ENCODE measurements at regions of chr14 and their contacts with region 1.

Region 1: DNA sequence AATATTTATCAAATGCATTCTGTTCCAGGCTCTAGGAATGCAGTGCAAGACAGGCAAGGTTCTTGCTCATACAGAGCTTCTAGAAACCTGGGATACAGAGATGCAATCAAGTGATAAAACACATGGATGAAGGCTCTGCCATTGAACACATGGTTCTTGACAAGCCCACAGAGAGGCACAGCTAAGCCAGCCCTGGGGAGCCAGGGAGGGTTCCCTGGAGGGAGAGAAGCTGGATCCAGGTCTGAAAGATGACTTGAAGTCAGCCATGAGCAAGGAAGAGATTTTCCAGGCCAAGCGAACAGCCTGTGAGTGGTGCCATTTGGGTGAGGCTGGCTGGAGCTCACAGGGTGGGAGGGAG is 66.2 kb downstream of the IRF2BPL start:
- DNase-seq: no peak
- ATAC-seq: no peak
- H3K4me3 ChIP-seq: peak overlapping the region; percentile 52
- H3K4me3 Mint-ChIP-seq: peak overlapping the region; percentile 74
- H3K27ac ChIP-seq: peak overlapping the region; percentile 77 to 91
- H3K27ac Mint-ChIP-seq: peak overlapping the region; percentile 89
- H3K4me1 ChIP-seq: peaks cover 71% of the 10 kb centered on the region
- H3K4me1 Mint-ChIP-seq: peaks cover 79% of the 10 kb centered on the region
- H3K27me3 ChIP-seq: no peaks in the 10 kb centered on the region
- H3K27me3 Mint-ChIP-seq: no peaks in the 10 kb centered on the region
- CTCF ChIP-seq: no peak

Region 2: GRCh38 chr14:76168531-76168930 is 793.8 kb before region 1 on chr14:
- CTCF ChIA-PET with region 1: no interaction called
- POLR2A ChIA-PET with region 1: no interaction called
- intact Hi-C with region 1: no loop called
- DNase-seq: no peak
- ATAC-seq: no peak
- H3K4me3 ChIP-seq: no peak overlapping the region
- H3K4me3 Mint-ChIP-seq: no peak overlapping the region
- H3K27ac ChIP-seq: no peak overlapping the region
- H3K27ac Mint-ChIP-seq: no peak overlapping the region
- H3K4me1 ChIP-seq: peaks cover 4% of the 10 kb centered on the region
- H3K4me1 Mint-ChIP-seq: peaks cover 43% of the 10 kb centered on the region
- H3K27me3 ChIP-seq: no peaks in the 10 kb centered on the region
- H3K27me3 Mint-ChIP-seq: no peaks in the 10 kb centered on the region
- CTCF ChIP-seq: no peak

Region 3: DNA sequence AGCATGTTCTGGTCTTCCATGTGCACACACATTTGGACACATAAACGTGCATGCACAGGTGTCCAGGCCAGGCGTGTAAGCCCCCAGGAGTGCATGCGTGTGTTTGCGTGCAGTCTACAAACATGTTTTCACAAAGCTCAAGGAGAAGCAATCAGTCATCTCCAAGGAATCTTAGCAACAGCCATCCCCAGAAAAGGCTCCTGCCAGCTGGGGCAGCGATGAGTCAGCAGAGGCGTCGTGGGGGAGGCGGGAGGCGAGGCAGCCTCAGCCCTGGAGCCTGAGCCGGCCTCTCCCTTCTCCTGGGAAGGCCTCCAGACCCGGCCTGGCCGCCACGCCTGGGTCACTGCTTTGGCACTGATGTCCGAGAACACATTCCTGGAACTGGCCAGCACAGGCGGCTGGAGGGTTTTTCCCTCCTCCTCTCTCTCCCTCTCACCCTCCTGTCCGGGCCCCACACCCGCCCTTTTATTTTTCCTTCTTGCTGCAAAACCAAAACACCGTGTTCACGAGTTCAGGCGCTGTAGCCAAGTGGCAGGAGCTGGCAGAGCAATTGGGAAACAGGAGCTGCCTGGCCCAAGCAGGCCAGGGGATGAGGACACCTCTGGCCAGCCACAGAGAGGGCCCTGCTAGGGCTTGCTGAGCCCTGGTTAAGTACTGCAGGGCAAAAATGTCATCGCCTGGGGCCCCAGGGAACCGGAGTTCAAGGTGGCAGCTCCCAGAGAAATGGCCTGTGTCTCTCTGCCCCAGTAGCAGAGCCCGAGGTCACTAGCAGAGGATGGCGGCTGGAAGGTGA is 43.3 kb before region 1 on chr14:
- CTCF ChIA-PET with region 1: interaction called, 20 read pairs
- POLR2A ChIA-PET with region 1: interaction called, 18 read pairs
- intact Hi-C with region 1: no loop called
- DNase-seq: peak in 2 of 14 experiments; percentile 46 to 49
- ATAC-seq: no peak
- H3K4me3 ChIP-seq: no peak overlapping the region
- H3K4me3 Mint-ChIP-seq: no peak overlapping the region
- H3K27ac ChIP-seq: no peak overlapping the region
- H3K27ac Mint-ChIP-seq: no peak overlapping the region
- H3K4me1 ChIP-seq: peaks cover 51% of the 10 kb centered on the region
- H3K4me1 Mint-ChIP-seq: peaks cover 60% of the 10 kb centered on the region
- H3K27me3 ChIP-seq: no peaks in the 10 kb centered on the region
- H3K27me3 Mint-ChIP-seq: no peaks in the 10 kb centered on the region
- CTCF ChIP-seq: no peak

Region 4: GRCh38 chr14:76947078-76947837 is 15.0 kb before region 1 on chr14:
- CTCF ChIA-PET with region 1: interaction called, 30 read pairs
- POLR2A ChIA-PET with region 1: interaction called, 16 read pairs
- intact Hi-C with region 1: no loop called
- DNase-seq: peak; percentile 59 to 92 (median 71)
- ATAC-seq: peak; percentile 98
- H3K4me3 ChIP-seq: peak overlapping the region; percentile 8
- H3K4me3 Mint-ChIP-seq: no peak overlapping the region
- H3K27ac ChIP-seq: peak overlapping the region in 1 of 2 donors; percentile 5
- H3K27ac Mint-ChIP-seq: peak overlapping the region; percentile 47
- H3K4me1 ChIP-seq: peaks cover 30% of the 10 kb centered on the region
- H3K4me1 Mint-ChIP-seq: peaks cover 30% of the 10 kb centered on the region
- H3K27me3 ChIP-seq: no peaks in the 10 kb centered on the region
- H3K27me3 Mint-ChIP-seq: no peaks in the 10 kb centered on the region
- CTCF ChIP-seq: peak; percentile 58

Region 5: DNA sequence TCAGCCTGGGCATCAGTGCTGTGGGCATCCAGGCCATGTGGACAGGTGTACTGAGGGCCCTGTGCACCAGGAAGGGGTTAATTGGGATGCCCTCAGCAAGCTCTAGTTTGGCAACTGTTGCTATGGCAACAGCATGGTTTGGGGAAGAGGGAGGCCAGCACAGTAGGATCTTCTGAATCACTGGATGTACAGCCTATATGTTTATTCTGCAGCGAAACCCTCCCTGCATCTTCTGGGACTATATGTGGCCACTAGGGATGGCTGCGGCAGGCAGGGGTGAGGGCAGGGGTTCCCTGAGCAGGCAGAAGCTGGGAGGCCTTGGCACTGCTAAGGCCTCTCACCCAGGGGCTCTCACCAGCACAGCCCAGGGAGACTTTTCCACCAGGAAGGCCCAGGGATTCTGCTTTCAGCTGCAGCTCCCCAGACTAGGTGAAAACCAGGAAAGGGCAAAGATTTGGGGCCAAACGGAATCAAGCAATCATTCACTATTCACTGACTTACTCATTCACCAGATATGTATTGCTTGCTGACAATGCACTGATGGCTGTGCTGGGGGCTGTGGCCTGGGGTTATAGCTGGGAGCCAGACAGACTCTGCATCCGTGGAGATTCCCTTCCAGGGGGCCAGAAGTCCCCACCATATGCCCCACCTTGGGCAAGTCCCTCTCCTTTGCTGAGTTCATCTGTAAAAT is 23.4 kb after region 1 on chr14:
- CTCF ChIA-PET with region 1: interaction called, 5 read pairs
- POLR2A ChIA-PET with region 1: interaction called, 10 read pairs
- intact Hi-C with region 1: no loop called
- DNase-seq: no peak
- ATAC-seq: no peak
- H3K4me3 ChIP-seq: no peak overlapping the region
- H3K4me3 Mint-ChIP-seq: no peak overlapping the region
- H3K27ac ChIP-seq: no peak overlapping the region
- H3K27ac Mint-ChIP-seq: no peak overlapping the region
- H3K4me1 ChIP-seq: peaks cover 7% of the 10 kb centered on the region
- H3K4me1 Mint-ChIP-seq: peaks cover 9% of the 10 kb centered on the region
- H3K27me3 ChIP-seq: no peaks in the 10 kb centered on the region
- H3K27me3 Mint-ChIP-seq: no peaks in the 10 kb centered on the region
- CTCF ChIP-seq: no peak

Region 6: DNA sequence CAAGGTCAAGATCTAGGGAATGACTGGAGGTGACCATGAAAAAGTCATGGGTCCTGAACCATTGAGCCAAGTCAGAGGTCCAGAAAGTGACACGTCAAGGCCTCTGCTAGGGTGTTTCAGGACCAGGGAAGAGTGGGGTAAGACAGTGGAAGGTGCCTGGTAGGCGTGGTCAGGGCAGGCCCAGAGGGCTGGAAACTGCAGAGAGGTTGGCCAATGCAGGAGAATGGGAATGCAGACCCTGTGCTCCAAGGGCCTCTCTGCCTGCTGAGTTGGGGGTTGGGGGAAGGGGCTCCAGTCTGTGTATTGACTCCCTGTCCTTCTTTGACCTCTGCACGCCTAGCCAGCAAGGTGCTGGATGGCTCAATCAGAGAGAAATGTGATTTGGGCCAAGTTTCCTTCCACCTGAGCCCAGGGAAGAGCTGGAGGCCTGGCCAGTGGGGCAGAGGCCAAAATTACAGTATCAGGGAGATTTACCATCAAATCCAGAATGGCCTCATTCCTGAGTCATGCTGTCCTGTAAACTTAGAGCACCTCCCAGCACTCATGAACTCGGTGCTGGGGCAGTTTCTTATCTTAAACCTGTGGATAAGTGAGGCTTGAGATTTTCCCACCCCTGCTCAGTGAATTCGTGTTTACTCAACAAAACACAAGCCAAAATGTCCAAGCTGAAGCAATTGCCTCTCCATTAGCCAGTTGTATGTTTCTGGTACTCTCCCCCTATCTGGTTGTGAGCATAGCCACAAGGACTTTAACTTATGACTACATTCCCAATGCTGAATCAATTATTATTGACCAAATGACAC is 41.9 kb after region 1 on chr14:
- CTCF ChIA-PET with region 1: no interaction called
- POLR2A ChIA-PET with region 1: no interaction called
- intact Hi-C with region 1: no loop called
- DNase-seq: no peak
- ATAC-seq: no peak
- H3K4me3 ChIP-seq: no peak overlapping the region
- H3K4me3 Mint-ChIP-seq: no peak overlapping the region
- H3K27ac ChIP-seq: no peak overlapping the region
- H3K27ac Mint-ChIP-seq: no peak overlapping the region
- H3K4me1 ChIP-seq: peaks cover 10% of the 10 kb centered on the region
- H3K4me1 Mint-ChIP-seq: peaks cover 9% of the 10 kb centered on the region
- H3K27me3 ChIP-seq: no peaks in the 10 kb centered on the region
- H3K27me3 Mint-ChIP-seq: no peaks in the 10 kb centered on the region
- CTCF ChIP-seq: no peak

Region 7: GRCh38 chr14:77028384-77029231 is 66.3 kb after region 1 on chr14 and contains the start of gene IRF2BPL:
- CTCF ChIA-PET with region 1: interaction called, 15 read pairs
- POLR2A ChIA-PET with region 1: interaction called, 81 read pairs
- intact Hi-C with region 1: loop called in 1 of 2 experiments (anchors 2 kb)
- DNase-seq: peak; percentile 88 to 98 (median 94)
- ATAC-seq: peak; percentile 66
- H3K4me3 ChIP-seq: peak within 1 kb of the TSS; percentile 95
- H3K4me3 Mint-ChIP-seq: peak within 1 kb of the TSS; percentile 93
- H3K27ac ChIP-seq: peak within 1 kb of the TSS; percentile 95
- H3K27ac Mint-ChIP-seq: peak within 1 kb of the TSS; percentile 100
- H3K4me1 ChIP-seq: peaks cover 84% of the 10 kb centered on the region
- H3K4me1 Mint-ChIP-seq: peaks cover 64% of the 10 kb centered on the region
- H3K27me3 ChIP-seq: no peaks in the 10 kb centered on the region
- H3K27me3 Mint-ChIP-seq: no peaks in the 10 kb centered on the region
- CTCF ChIP-seq: no peak
- total RNA-seq, gene IRF2BPL: 70.9 to 71.8 TPM

Region 8: GRCh38 chr14:77053046-77053841 is 91.0 kb after region 1 on chr14:
- CTCF ChIA-PET with region 1: interaction called, 7 read pairs
- POLR2A ChIA-PET with region 1: interaction called, 10 read pairs
- intact Hi-C with region 1: no loop called
- DNase-seq: peak; percentile 62 to 90 (median 72)
- ATAC-seq: peak; percentile 87
- H3K4me3 ChIP-seq: no peak overlapping the region
- H3K4me3 Mint-ChIP-seq: no peak overlapping the region
- H3K27ac ChIP-seq: no peak overlapping the region
- H3K27ac Mint-ChIP-seq: no peak overlapping the region
- H3K4me1 ChIP-seq: peaks cover 28% of the 10 kb centered on the region
- H3K4me1 Mint-ChIP-seq: peaks cover 18% of the 10 kb centered on the region
- H3K27me3 ChIP-seq: no peaks in the 10 kb centered on the region
- H3K27me3 Mint-ChIP-seq: no peaks in the 10 kb centered on the region
- CTCF ChIP-seq: peak; percentile 95

Region 9: DNA sequence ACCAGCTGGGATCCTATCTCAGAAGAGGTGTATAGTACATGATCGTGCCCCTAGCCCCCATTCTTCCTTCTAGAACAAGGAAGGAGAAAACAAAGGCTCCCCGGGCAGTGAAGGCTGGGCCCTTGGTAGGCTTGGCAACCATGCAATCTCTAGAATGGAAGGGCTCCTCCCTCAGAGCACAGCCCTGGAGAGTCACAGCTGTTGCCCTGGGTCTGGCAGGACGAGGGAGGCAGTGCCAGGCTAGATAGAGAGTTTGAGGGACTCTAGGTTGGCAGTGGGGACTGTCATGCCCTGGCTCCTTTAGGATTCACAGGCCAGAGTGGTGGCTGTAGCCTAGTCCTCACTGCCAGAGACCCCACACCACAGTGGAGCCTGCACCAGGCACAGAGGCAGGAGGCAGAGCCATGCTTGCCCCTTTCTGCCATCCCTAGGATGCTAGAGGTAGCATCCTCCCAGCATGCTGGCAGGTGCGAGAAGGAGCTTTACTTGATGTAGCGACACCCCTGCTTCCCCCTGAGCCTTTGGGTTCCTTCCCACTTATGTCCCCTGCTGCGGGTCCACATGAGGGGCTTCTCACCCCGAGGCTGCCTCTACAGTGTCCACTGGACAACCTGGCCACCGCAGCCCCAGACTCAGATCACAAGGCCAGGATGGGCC is 102.4 kb after region 1 on chr14:
- CTCF ChIA-PET with region 1: no interaction called
- POLR2A ChIA-PET with region 1: no interaction called
- intact Hi-C with region 1: no loop called
- DNase-seq: no peak
- ATAC-seq: no peak
- H3K4me3 ChIP-seq: no peak overlapping the region
- H3K4me3 Mint-ChIP-seq: no peak overlapping the region
- H3K27ac ChIP-seq: no peak overlapping the region
- H3K27ac Mint-ChIP-seq: no peak overlapping the region
- H3K4me1 ChIP-seq: peaks cover 13% of the 10 kb centered on the region
- H3K4me1 Mint-ChIP-seq: no peaks in the 10 kb centered on the region
- H3K27me3 ChIP-seq: no peaks in the 10 kb centered on the region
- H3K27me3 Mint-ChIP-seq: peaks cover 4% of the 10 kb centered on the region
- CTCF ChIP-seq: no peak

Measured in CD4-positive, alpha-beta T cell (primary cell).